CD8-positive, alpha-beta T cell (primary cell): ENCODE measurements at regions of chr2 and their contacts with region 1.

Region 1: GRCh38 chr2:73176881-73177644 is 25.3 kb upstream of the NOTO start:
- DNase-seq: peak; percentile 80 to 94 (median 91)
- ATAC-seq: peak; percentile 92
- H3K4me3 ChIP-seq: peak overlapping the region; percentile 65
- H3K4me3 Mint-ChIP-seq: peak overlapping the region; percentile 89
- H3K27ac ChIP-seq: no peak overlapping the region
- H3K27ac Mint-ChIP-seq: no peak overlapping the region
- H3K4me1 ChIP-seq: peaks cover 26% of the 10 kb centered on the region
- H3K4me1 Mint-ChIP-seq: peaks cover 14% of the 10 kb centered on the region
- H3K27me3 ChIP-seq: peaks cover 6 to 11% of the 10 kb centered on the region in 2 experiments
- H3K27me3 Mint-ChIP-seq: peaks cover 20% of the 10 kb centered on the region
- CTCF ChIP-seq: peak; percentile 92

Region 2: DNA sequence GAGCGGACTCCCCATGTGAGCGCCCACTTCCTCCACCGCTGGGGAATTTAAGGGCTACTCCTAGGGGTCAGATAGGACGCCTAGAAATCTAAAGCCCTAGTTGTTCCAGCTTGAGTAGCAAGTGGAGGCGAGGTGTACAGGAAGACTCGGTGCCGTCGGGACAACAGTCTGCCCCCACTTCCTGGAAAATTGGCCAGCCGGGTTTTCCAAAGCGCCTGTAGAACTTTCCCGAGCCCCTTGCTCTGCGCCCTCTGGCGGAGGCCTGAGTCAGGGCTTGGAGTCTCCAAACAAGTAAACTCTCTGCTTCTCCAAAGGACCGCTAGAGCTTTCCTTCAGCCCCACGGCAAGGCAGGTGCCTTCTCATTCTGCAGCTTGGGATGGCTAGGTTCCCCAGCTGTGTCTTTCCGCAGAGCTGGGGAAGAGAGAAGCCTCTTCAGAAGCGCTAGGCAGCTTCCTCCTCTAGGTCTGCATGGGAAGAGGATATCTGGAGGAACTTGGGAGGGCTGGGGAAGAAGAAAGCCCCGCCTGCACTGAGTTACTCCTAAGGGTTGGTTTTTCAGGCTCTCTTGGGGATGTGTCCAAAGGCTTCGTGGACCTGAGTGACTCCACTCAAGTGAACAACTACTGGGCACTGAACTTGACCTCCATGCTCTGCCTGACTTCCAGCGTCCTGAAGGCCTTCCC is 289.2 kb before region 1 on chr2:
- CTCF ChIA-PET with region 1: interaction called, 35 read pairs
- POLR2A ChIA-PET with region 1: no interaction called
- intact Hi-C with region 1: loop called (anchors 2 to 5 kb)
- DNase-seq: peak in 8 of 9 experiments; percentile 31 to 64 (median 52)
- ATAC-seq: peak; percentile 24
- H3K4me3 ChIP-seq: peak overlapping the region; percentile 49 to 70
- H3K4me3 Mint-ChIP-seq: peak overlapping the region; percentile 77
- H3K27ac ChIP-seq: no peak overlapping the region
- H3K27ac Mint-ChIP-seq: no peak overlapping the region
- H3K4me1 ChIP-seq: peaks cover 6% of the 10 kb centered on the region
- H3K4me1 Mint-ChIP-seq: peaks cover 7% of the 10 kb centered on the region
- H3K27me3 ChIP-seq: peaks cover 1 to 17% of the 10 kb centered on the region in 2 experiments
- H3K27me3 Mint-ChIP-seq: peaks cover 56% of the 10 kb centered on the region
- CTCF ChIP-seq: peak; percentile 54

Region 3: GRCh38 chr2:73071360-73072133 is 105.5 kb before region 1 on chr2 and contains the start of gene SFXN5:
- CTCF ChIA-PET with region 1: interaction called, 6 read pairs
- POLR2A ChIA-PET with region 1: interaction called, 3 read pairs
- intact Hi-C with region 1: loop called (anchors 1 to 2 kb)
- DNase-seq: peak; percentile 89 to 98 (median 95)
- ATAC-seq: peak; percentile 82
- H3K4me3 ChIP-seq: peak within 1 kb of the TSS; percentile 94 to 95
- H3K4me3 Mint-ChIP-seq: peak within 1 kb of the TSS; percentile 96
- H3K27ac ChIP-seq: peak within 1 kb of the TSS; percentile 73 to 86
- H3K27ac Mint-ChIP-seq: peak within 1 kb of the TSS; percentile 92
- H3K4me1 ChIP-seq: peaks cover 13% of the 10 kb centered on the region
- H3K4me1 Mint-ChIP-seq: peaks cover 41% of the 10 kb centered on the region
- H3K27me3 ChIP-seq: no peaks in the 10 kb centered on the region
- H3K27me3 Mint-ChIP-seq: no peaks in the 10 kb centered on the region
- CTCF ChIP-seq: no peak
- total RNA-seq, gene SFXN5: 6.1 to 9.3 TPM

Region 4: DNA sequence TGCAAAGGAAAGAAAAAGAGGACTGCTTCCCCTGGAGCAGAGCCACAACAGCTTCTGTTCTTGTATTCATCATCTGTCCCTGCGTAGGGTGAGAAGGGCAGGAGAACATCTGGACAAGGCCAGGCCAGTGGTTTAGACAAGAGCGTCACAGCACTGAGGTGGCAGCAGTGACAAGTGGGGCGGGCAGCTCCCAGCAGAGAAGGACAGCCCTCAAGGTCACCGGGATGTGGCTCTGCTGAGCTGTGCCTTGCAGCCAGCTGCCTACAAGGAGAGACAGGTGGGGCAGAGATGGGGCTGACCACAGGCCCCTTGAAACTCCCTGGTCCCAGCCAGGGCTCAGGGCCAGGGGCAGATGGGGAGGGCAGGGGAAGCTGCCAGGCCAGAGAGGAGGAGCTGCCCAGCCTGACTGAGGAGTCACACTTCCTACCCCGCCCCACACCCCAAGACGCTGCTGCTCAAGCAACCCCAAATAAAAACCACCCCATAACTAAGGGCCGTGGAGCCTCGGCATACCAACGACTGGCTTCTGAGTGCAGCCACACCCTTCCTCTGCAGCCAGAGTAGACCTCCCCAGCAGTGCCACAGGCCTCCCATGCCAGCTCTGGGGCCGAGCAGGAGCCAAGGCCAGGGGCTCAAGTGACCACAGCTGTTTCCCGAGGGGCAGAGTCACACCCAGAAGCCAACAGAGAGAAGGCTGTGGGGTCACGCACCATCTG is 69.7 kb before region 1 on chr2:
- CTCF ChIA-PET with region 1: interaction called, 12 read pairs
- POLR2A ChIA-PET with region 1: no interaction called
- intact Hi-C with region 1: loop called (anchors 2 kb)
- DNase-seq: peak in 2 of 9 experiments; percentile 42 to 43
- ATAC-seq: no peak
- H3K4me3 ChIP-seq: no peak overlapping the region
- H3K4me3 Mint-ChIP-seq: no peak overlapping the region
- H3K27ac ChIP-seq: peak overlapping the region in 1 of 2 experiments; percentile 41
- H3K27ac Mint-ChIP-seq: no peak overlapping the region
- H3K4me1 ChIP-seq: peaks cover 12% of the 10 kb centered on the region
- H3K4me1 Mint-ChIP-seq: peaks cover 23% of the 10 kb centered on the region
- H3K27me3 ChIP-seq: peaks cover 0 to 3% of the 10 kb centered on the region in 2 experiments
- H3K27me3 Mint-ChIP-seq: no peaks in the 10 kb centered on the region
- CTCF ChIP-seq: no peak

Region 5: GRCh38 chr2:73163483-73164367 is 13.3 kb before region 1 on chr2:
- CTCF ChIA-PET with region 1: interaction called, 15 read pairs
- POLR2A ChIA-PET with region 1: no interaction called
- intact Hi-C with region 1: no loop called
- DNase-seq: peak; percentile 31 to 77 (median 66)
- ATAC-seq: peak; percentile 86
- H3K4me3 ChIP-seq: no peak overlapping the region
- H3K4me3 Mint-ChIP-seq: no peak overlapping the region
- H3K27ac ChIP-seq: no peak overlapping the region
- H3K27ac Mint-ChIP-seq: no peak overlapping the region
- H3K4me1 ChIP-seq: no peaks in the 10 kb centered on the region
- H3K4me1 Mint-ChIP-seq: no peaks in the 10 kb centered on the region
- H3K27me3 ChIP-seq: no peaks in the 10 kb centered on the region
- H3K27me3 Mint-ChIP-seq: peaks cover 20% of the 10 kb centered on the region
- CTCF ChIP-seq: peak; percentile 78

Region 6: DNA sequence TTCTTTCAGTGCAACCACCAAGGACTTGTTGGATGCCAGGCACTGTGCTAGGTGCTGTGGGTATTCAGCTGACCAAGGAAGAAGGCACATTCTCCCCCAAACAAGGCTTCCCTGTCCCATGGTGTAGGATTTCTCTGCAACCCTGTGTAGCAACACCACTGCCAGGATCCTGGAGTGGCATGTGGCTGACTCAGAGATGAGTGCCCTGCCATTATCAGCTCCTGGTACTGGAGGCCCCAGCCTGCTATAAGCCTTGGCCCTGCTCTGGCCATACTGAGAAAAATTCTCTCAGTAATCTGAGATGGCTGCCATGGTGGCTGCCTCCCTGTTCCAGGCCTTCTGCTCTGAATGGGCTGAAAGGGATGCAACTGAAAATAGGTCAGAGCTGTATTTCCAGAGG is 41.2 kb after region 1 on chr2:
- CTCF ChIA-PET with region 1: interaction called, 65 read pairs
- POLR2A ChIA-PET with region 1: no interaction called
- intact Hi-C with region 1: no loop called
- DNase-seq: no peak
- ATAC-seq: no peak
- H3K4me3 ChIP-seq: no peak overlapping the region
- H3K4me3 Mint-ChIP-seq: no peak overlapping the region
- H3K27ac ChIP-seq: no peak overlapping the region
- H3K27ac Mint-ChIP-seq: no peak overlapping the region
- H3K4me1 ChIP-seq: peaks cover 18% of the 10 kb centered on the region
- H3K4me1 Mint-ChIP-seq: peaks cover 27% of the 10 kb centered on the region
- H3K27me3 ChIP-seq: no peaks in the 10 kb centered on the region
- H3K27me3 Mint-ChIP-seq: no peaks in the 10 kb centered on the region
- CTCF ChIP-seq: no peak

Region 7: DNA sequence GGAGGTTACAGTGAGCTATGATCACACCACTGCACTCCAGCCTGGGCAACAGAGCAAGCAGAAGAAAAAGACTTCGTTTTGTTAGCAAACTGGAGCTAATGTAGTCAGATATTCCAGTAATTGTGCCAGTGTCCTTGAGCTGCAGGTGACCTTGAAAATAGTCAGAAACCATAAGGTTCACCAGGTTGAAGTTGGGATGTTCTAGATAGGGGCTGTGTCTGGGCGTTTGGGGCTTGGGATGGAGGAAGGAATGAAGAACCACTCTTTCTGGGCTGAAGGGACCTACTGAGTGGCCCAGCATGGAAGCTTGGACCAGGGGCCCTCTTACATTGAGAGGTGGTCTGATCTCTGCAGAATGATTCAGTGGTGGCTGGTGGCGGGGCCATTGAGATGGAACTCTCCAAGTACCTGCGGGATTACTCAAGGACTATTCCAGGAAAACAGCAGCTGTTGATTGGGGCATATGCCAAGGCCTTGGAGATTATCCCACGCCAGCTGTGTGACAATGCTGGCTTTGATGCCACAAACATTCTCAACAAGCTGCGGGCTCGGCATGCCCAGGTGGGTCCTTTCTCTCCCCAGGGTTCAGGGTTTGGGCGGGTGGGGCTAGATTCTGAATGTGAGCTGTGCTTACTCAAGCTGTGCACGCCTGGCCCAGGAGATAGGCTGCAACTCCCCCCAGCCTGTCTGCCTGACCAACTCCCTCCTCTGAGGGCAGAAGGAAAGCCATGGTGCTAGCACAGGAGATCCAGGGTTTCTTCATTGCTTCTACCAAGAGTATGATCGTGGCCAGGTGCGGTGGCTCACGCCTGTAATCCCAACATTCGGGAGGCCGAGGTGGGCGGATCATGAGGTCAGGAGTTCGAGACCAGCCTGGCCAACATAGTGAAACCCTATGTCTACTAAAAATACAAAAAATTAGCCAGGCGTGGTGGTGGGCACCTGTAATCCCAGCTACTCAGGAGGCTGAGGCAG is 74.1 kb after region 1 on chr2:
- CTCF ChIA-PET with region 1: no interaction called
- POLR2A ChIA-PET with region 1: no interaction called
- intact Hi-C with region 1: no loop called
- DNase-seq: no peak
- ATAC-seq: no peak
- H3K4me3 ChIP-seq: no peak overlapping the region
- H3K4me3 Mint-ChIP-seq: no peak overlapping the region
- H3K27ac ChIP-seq: no peak overlapping the region
- H3K27ac Mint-ChIP-seq: peak overlapping the region; percentile 49
- H3K4me1 ChIP-seq: no peaks in the 10 kb centered on the region
- H3K4me1 Mint-ChIP-seq: peaks cover 3% of the 10 kb centered on the region
- H3K27me3 ChIP-seq: no peaks in the 10 kb centered on the region
- H3K27me3 Mint-ChIP-seq: no peaks in the 10 kb centered on the region
- CTCF ChIP-seq: no peak

Region 8: GRCh38 chr2:73614105-73614504 is 437.0 kb after region 1 on chr2:
- CTCF ChIA-PET with region 1: no interaction called
- POLR2A ChIA-PET with region 1: no interaction called
- intact Hi-C with region 1: no loop called
- DNase-seq: no peak
- ATAC-seq: no peak
- H3K4me3 ChIP-seq: no peak overlapping the region
- H3K4me3 Mint-ChIP-seq: no peak overlapping the region
- H3K27ac ChIP-seq: no peak overlapping the region
- H3K27ac Mint-ChIP-seq: no peak overlapping the region
- H3K4me1 ChIP-seq: no peaks in the 10 kb centered on the region
- H3K4me1 Mint-ChIP-seq: no peaks in the 10 kb centered on the region
- H3K27me3 ChIP-seq: no peaks in the 10 kb centered on the region
- H3K27me3 Mint-ChIP-seq: no peaks in the 10 kb centered on the region
- CTCF ChIP-seq: no peak